Astrocyte of the cerebellum (primary cell): ENCODE measurements at regions of chr19 and their contacts with region 1.

Region 1: GRCh38 chr19:49911381-49912145 is 14.9 kb upstream of the IL4I1 start:
- DNase-seq: no peak
- H3K4me3 ChIP-seq: no peak overlapping the region
- CTCF ChIP-seq: no peak

Region 2: DNA sequence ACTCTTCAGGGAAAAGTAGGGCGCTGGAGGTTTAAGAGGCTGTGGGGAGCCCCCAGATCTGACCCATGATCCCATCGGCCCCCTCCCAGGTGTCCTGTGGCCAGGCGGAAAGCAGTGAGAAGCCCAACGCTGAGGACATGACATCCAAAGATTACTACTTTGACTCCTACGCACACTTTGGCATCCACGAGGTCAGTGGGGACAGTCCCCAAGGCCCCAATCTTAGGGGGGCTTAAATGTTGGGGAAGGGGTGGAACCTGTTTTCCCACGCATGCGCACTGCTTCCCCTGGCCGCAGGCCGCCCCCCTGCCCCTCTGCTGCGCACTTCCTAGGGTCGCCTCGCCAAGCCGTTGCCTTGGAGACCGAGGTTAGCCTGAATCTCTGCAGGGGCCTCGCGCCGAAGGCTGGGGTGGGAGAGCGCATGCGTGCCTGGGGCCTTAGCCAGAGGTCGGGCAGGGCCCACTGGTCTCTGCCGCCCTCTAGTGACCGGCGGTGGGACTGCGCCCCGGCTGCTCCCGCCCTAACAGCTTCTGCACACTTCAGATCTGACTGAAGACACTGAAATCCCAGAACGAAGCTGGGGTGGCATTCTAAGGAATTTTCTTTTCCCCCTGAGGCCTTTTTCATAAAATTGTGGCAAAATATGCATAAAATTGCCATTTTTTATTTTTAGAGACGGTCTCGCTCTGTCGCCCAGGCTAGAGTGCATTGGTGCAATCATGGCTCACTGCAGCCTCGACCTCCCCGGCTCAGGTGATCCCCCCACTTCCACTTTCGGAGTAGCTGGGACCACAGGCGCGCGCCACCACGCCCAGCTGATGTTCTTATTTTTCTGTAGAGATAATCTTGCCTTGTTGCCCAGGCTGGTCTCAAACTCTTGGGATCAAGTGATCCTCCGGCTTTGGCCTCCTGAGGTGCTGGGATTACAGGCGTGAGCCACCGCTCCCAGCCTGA is 230.9 kb before region 1 on chr19:
- in situ Hi-C with region 1: no loop called
- DNase-seq: peak; percentile 67
- H3K4me3 ChIP-seq: peak overlapping the region; percentile 14
- CTCF ChIP-seq: peak; percentile 100

Region 3: GRCh38 chr19:49866933-49867782 is 44.4 kb before region 1 on chr19 and contains the start of gene PNKP:
- in situ Hi-C with region 1: no loop called
- DNase-seq: peak; percentile 69
- H3K4me3 ChIP-seq: peak within 1 kb of the TSS; percentile 79
- CTCF ChIP-seq: no peak

Region 4: DNA sequence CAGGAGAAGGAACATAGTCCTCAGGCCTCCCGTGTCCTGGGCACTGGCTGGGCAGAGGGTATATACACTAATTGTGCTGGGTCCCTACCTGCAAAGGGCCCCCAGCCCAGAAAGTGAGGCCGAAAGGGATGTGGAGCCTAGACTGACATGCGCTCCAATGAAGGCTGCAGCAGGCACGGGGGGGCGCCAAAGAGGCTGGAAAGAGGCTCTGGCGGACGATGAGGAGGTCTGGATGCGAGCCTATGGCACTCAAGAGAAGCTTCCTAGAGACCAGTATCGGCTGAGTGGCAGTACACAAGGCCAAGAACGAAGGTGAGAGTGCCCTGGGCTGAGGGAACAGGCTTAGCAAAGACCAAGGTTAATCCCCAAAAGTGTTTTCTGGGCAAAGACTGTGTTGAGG is 97.0 kb after region 1 on chr19:
- in situ Hi-C with region 1: loop called (anchors 5 kb)
- DNase-seq: no peak
- H3K4me3 ChIP-seq: no peak overlapping the region
- CTCF ChIP-seq: peak; percentile 22